A673 (cell line): ENCODE measurements at regions of chr1 and their contacts with region 1.

Region 1: DNA sequence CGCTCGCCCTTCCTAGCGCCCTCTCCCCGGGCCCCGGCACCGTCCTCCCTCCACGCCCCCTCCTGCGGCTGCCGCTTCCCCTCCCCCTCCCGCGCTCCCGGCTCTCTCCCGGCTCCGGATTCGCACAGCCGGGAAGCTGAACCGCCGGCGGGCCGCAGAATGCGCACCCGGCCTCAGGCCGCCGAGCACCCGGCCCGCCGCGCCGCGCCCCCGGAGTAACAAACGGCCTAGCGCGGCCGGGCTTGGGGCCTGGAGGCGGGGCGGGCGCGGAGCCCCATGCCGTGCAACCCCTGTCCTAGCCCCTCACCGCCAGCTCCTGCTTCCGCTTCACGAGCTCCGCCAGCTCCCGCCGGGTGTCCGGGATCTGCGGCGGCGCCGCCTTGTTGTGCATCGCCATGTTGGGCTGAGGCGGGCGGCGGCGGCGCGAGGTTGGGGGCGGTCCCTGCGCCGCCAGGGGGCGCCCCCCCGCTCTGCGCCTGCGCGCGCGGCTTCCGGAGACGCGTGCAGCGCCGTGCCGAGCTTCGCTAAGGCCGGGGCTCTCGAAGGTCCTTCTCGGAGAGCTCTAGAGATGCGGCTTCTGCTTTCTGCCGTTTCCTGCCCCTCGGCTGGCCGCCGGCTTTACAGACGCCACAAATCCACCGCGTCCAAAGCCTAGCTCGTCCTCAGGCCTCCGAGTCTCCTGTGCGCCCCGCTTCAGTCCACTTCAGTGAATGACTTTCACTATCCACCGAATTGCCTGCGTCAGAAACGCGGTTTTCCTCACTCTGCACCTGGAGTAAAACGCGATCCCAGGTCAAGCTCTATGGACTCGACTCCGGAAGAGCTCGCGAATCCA is at the start of gene MEAF6:
- DNase-seq: peak; percentile 88
- H3K4me3 ChIP-seq: peak within 1 kb of the TSS; percentile 99
- H3K27ac ChIP-seq: peak within 1 kb of the TSS; percentile 92
- H3K4me1 ChIP-seq: no peaks in the 10 kb centered on the region
- H3K27me3 ChIP-seq: no peaks in the 10 kb centered on the region
- CTCF ChIP-seq: peak; percentile 54
- total RNA-seq, gene MEAF6: 73.8 and 75.7 TPM in 2 replicates

Region 2: GRCh38 chr1:37306461-37306860 is 208.1 kb before region 1 on chr1:
- CTCF ChIA-PET with region 1: no interaction called
- POLR2A ChIA-PET with region 1: no interaction called
- intact Hi-C with region 1: no loop called
- DNase-seq: no peak
- H3K4me3 ChIP-seq: no peak overlapping the region
- H3K27ac ChIP-seq: no peak overlapping the region
- H3K4me1 ChIP-seq: no peaks in the 10 kb centered on the region
- H3K27me3 ChIP-seq: peaks cover 27% of the 10 kb centered on the region
- CTCF ChIP-seq: no peak

Region 3: GRCh38 chr1:37354876-37355650 is 159.5 kb before region 1 on chr1:
- CTCF ChIA-PET with region 1: no interaction called
- POLR2A ChIA-PET with region 1: no interaction called
- intact Hi-C with region 1: no loop called
- DNase-seq: no peak
- H3K4me3 ChIP-seq: no peak overlapping the region
- H3K27ac ChIP-seq: no peak overlapping the region
- H3K4me1 ChIP-seq: no peaks in the 10 kb centered on the region
- H3K27me3 ChIP-seq: peaks cover 29% of the 10 kb centered on the region
- CTCF ChIP-seq: no peak

Region 4: DNA sequence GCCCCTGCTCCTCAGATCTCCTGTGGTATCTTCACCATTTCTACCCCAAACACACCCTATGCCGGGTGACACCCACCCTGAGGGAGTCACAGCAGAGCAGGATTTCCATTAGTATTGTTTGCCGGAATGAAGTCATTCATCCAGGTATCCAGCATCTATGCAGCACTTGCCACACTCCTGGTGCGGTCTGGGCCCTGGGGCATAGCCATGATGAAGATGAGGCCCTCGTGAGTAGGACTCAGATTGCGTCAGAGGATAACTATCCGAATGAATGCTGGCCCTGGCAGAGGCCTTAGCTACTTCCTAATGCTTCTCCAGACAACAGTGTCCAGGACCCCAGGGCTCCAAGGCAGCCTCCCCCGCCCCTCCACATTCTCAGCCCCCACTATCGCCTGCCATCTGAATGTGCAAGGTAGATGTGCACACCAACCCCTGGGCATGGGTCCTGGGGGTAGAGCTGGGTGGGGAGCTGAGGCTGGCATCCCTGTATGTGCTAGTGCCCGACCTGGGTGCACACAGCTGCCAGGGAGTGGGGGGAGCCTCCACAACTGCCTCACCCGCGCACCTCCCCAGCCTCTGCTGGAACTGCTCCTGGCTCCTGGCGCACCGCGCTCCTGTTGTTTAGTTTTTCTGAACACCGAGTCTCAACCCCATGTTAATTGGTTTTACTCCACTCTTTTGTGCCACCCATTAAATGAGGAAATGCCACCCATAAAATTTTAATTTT is 65.7 kb before region 1 on chr1:
- CTCF ChIA-PET with region 1: no interaction called
- POLR2A ChIA-PET with region 1: interaction called, 15 read pairs
- intact Hi-C with region 1: no loop called
- DNase-seq: no peak
- H3K4me3 ChIP-seq: no peak overlapping the region
- H3K27ac ChIP-seq: no peak overlapping the region
- H3K4me1 ChIP-seq: no peaks in the 10 kb centered on the region
- H3K27me3 ChIP-seq: no peaks in the 10 kb centered on the region
- CTCF ChIP-seq: no peak

Region 5: DNA sequence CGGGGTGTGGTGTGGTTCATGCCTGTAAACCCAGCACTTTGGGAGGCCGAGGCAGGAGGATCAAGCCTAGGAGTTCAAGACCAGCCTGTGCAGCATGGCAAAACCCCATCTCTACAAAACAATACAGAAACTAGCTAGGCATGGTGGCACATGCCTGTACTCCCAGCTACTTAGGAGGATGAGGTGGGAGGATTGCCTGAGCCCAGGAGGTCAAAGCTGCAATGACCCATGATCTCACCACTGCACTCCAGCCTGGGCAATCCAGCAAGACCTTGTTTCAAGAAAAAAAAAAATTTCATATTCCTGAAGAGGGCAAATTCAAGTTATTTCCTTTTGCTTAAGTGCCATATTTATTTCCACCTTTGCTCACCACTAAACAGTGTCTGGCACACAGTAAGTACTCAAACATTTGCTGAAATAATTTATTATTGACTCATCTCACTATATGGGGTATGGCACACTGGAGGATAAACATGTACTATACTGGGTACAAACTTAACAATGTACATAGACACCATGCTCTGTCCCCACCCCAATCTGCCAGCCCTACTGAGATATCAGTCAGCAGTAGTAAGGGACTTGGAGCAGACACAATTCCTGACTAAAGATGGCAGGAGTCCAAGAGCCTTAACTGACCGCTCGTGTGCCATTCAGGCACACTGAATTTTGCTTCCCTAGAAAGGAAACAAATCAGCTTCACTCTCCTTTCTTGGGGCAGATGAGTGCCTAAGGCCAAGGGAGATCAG is 15.5 kb before region 1 on chr1:
- CTCF ChIA-PET with region 1: interaction called, 19 read pairs
- POLR2A ChIA-PET with region 1: interaction called, 3 read pairs
- intact Hi-C with region 1: no loop called
- DNase-seq: no peak
- H3K4me3 ChIP-seq: no peak overlapping the region
- H3K27ac ChIP-seq: no peak overlapping the region
- H3K4me1 ChIP-seq: no peaks in the 10 kb centered on the region
- H3K27me3 ChIP-seq: no peaks in the 10 kb centered on the region
- CTCF ChIP-seq: no peak

Region 6: DNA sequence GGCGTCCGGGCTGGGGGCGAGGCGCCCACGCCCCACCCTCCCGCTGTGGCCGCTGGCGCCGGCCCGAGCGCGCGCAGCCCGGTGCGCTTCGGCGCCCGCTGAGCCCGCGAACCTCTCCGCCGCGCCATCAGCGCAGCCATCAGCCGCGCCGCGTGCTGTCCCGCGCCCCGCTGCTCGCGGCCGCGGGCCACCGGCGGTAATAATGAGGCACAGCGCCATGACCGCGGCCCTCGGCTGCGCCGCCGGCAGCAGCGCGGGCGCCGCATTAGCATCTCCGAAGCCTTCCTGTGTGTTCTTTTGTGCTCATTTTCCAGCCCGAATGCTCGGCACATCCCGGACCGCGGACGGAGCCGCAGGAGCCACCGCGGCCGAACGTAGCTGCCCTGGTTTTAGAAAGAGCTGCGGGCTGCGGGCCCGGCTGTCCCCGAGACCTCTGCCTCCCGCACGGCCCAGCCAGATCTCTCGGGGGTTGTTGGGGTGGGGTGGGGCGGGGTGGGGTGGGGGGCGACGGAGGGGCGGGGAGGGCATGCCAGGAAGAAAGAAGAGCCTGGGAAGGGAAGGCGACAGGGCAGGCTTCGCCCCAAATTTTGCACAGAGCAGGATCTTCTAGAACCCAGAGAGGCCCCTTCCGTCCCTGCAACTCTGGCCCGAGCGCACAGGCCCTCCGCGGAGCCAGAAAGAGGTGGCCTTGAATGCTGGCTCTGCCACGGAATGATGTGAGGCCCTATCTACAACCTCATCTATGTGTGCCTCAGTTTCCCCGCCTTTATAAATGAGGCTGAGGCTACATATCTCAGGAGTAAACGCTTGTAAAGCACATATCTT is 1289.7 kb after region 1 on chr1:
- CTCF ChIA-PET with region 1: no interaction called
- POLR2A ChIA-PET with region 1: interaction called, 13 read pairs
- intact Hi-C with region 1: no loop called
- DNase-seq: peak; percentile 53
- H3K4me3 ChIP-seq: peak overlapping the region; percentile 45
- H3K27ac ChIP-seq: no peak overlapping the region
- H3K4me1 ChIP-seq: peaks cover 7% of the 10 kb centered on the region
- H3K27me3 ChIP-seq: no peaks in the 10 kb centered on the region
- CTCF ChIP-seq: no peak